Activated CD8-positive, alpha-beta memory T cell treated with anti-CD3 and anti-CD28 coated beads, Interleukin-2, amount 10 ng/mL, durations not matched to agents 7 days and 5 days (primary cell): ENCODE measurements at regions of chr17 and their contacts with region 1.

Region 1: DNA sequence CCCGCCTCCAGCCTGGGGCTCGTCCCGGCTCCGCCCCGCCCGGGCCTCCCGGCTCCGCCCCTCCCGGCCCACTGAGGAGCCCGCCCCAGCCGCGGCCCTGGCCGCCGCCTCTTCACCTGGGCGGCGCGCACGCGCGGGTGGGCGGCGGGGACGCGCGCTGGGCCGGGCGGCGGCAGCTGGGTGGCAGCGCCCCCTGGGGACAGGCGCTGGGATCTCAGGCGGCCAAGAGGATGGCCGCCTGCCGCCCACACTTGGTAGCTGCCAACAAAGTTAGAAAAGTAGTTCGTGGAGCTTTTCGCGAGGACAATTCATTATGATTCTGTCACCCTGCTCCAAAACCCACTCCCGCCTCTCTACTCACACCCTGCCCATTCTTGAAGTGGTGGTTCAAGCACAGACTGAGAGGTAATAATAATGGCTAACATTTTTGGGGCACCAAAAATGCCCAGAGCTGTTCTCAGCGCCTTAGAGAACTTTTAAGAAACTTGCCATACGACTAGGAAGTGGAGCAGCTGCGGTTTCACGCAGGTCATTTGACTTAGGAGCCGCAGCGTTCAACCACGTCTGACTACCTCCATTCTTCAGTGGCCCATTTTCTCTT is 340 bp upstream of the MYO1D start:
- DNase-seq: peak; percentile 94
- ATAC-seq: peak; percentile 97
- H3K4me3 Mint-ChIP-seq: peak overlapping the region; percentile 66
- H3K27ac Mint-ChIP-seq: peak overlapping the region; percentile 87
- H3K4me1 Mint-ChIP-seq: peaks cover 16% of the 10 kb centered on the region
- H3K27me3 Mint-ChIP-seq: peaks cover 12% of the 10 kb centered on the region

Region 2: GRCh38 chr17:32783602-32784001 is 93.7 kb before region 1 on chr17:
- CTCF ChIA-PET with region 1: interaction called, 125 read pairs
- DNase-seq: no peak
- ATAC-seq: peak; percentile 47
- H3K4me3 Mint-ChIP-seq: no peak overlapping the region
- H3K27ac Mint-ChIP-seq: no peak overlapping the region
- H3K4me1 Mint-ChIP-seq: peaks cover 2% of the 10 kb centered on the region
- H3K27me3 Mint-ChIP-seq: no peaks in the 10 kb centered on the region

Region 3: GRCh38 chr17:32805029-32805976 is 72.0 kb before region 1 on chr17:
- CTCF ChIA-PET with region 1: interaction called, 12 read pairs
- DNase-seq: no peak
- ATAC-seq: peak; percentile 53
- H3K4me3 Mint-ChIP-seq: no peak overlapping the region
- H3K27ac Mint-ChIP-seq: no peak overlapping the region
- H3K4me1 Mint-ChIP-seq: peaks cover 30% of the 10 kb centered on the region
- H3K27me3 Mint-ChIP-seq: no peaks in the 10 kb centered on the region

Region 4: GRCh38 chr17:32835291-32835761 is 41.9 kb before region 1 on chr17:
- CTCF ChIA-PET with region 1: interaction called, 16 read pairs
- DNase-seq: no peak
- ATAC-seq: no peak
- H3K4me3 Mint-ChIP-seq: no peak overlapping the region
- H3K27ac Mint-ChIP-seq: no peak overlapping the region
- H3K4me1 Mint-ChIP-seq: peaks cover 2% of the 10 kb centered on the region
- H3K27me3 Mint-ChIP-seq: no peaks in the 10 kb centered on the region

Region 5: GRCh38 chr17:32894245-32894644 is 17.0 kb after region 1 on chr17:
- CTCF ChIA-PET with region 1: interaction called, 10 read pairs
- DNase-seq: no peak
- ATAC-seq: no peak
- H3K4me3 Mint-ChIP-seq: no peak overlapping the region
- H3K27ac Mint-ChIP-seq: no peak overlapping the region
- H3K4me1 Mint-ChIP-seq: peaks cover 2% of the 10 kb centered on the region
- H3K27me3 Mint-ChIP-seq: peaks cover 16% of the 10 kb centered on the region

Region 6: DNA sequence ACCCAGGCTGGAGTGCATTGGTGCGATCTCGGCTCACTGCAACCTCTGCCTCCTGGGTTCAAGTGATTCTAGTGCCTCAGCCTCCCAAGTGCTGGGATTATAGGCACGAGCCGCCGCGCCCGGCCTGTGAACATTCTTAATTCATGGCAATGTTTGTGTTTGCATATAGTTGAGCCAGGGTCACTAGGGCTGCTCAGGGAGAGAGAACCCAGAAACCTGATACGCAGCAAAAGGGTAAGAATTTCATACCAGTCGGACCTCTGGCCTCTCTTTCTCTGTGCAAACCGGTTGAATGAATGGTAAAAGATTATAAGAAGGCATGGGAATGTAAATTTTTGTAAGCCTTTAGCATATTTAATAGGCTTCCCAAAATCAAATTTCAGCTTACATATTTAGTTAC is 43.8 kb after region 1 on chr17:
- CTCF ChIA-PET with region 1: interaction called, 190 read pairs
- DNase-seq: no peak
- ATAC-seq: no peak
- H3K4me3 Mint-ChIP-seq: no peak overlapping the region
- H3K27ac Mint-ChIP-seq: no peak overlapping the region
- H3K4me1 Mint-ChIP-seq: peaks cover 23% of the 10 kb centered on the region
- H3K27me3 Mint-ChIP-seq: peaks cover 13% of the 10 kb centered on the region

Region 7: DNA sequence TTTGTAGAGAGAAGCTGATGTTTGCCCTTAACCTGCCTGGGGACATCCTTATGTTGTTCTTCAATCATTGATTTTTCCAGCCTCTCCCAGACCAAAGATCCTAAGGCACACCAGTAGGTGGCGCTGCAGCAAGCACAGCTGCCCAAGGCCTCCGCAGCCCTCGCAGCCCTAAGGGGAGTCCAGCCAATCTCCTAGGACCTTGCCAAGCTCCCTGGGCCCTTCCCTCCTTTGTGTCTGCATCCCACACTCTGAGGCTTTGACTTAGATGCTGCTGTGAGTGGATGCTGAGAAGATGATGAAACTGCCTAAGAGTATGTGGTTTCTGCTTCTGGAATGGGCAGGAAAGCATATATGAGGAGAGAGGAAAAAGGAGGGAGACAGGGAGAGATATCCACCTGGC is 161.5 kb after region 1 on chr17:
- CTCF ChIA-PET with region 1: no interaction called
- DNase-seq: no peak
- ATAC-seq: no peak
- H3K4me3 Mint-ChIP-seq: no peak overlapping the region
- H3K27ac Mint-ChIP-seq: no peak overlapping the region
- H3K4me1 Mint-ChIP-seq: no peaks in the 10 kb centered on the region
- H3K27me3 Mint-ChIP-seq: peaks cover 25% of the 10 kb centered on the region